ENCODE measurements at regions of chr15 and their contacts with region 1.

Region 1: GRCh38 chr15:34514251-34514670 is 69.2 kb downstream of the GOLGA8B start:
- DNase-seq: peak; percentile 39
- ATAC-seq: peak; percentile 83
- H3K4me3 Mint-ChIP-seq: peak overlapping the region; percentile 78
- H3K27ac Mint-ChIP-seq: no peak overlapping the region
- H3K4me1 Mint-ChIP-seq: peaks cover 24% of the 10 kb centered on the region
- H3K27me3 Mint-ChIP-seq: peaks cover 56% of the 10 kb centered on the region

Region 2: GRCh38 chr15:34483644-34484043 is 30.6 kb before region 1 on chr15:
- CTCF ChIA-PET with region 1: no interaction called
- POLR2A ChIA-PET with region 1: no interaction called
- DNase-seq: no peak
- ATAC-seq: no peak
- H3K4me3 Mint-ChIP-seq: no peak overlapping the region
- H3K27ac Mint-ChIP-seq: no peak overlapping the region
- H3K4me1 Mint-ChIP-seq: no peaks in the 10 kb centered on the region
- H3K27me3 Mint-ChIP-seq: peaks cover 55% of the 10 kb centered on the region

Region 3: DNA sequence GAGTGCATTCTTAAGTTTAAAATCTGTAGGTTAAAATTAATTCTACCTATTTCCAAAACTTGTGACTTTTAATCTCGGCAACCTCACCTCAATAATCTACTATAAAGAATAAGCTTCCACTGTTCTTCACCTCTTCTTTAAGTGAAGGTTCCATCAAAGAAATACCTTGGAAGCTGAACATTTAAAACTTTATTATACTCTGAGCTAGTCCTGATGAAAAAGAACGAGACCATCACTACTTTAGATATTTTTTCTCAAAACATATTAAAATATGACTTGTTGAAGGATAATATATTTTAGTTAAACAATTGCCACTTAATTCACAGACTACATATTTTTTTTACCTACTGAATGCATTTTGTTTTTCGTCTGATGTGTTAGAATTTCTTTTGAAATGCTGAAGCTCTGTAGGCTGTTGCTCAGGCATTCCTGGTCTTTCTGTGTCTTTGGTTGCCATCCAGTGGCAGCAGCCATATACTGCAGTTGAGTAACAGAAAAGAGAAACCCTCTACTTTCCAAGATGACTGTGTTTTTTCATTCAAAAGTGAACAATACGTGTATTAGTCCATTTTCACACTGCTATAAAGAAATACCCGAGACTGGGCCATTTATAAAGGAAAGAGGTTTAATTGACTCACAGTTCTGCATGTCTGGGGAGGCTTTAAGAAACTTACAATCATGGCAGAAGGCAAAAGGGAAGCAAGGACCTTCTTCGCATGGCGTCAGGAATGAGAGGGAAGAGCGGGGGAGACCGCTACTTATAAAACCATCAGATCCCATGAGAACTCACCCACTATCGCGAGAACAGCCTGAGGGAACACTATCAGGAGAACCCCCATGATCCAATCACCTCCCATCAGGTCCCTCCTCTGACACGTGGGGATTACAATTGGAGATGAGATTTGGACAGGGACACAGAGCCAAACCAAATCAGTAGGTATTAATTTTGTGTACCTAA is 73.7 kb after region 1 on chr15:
- CTCF ChIA-PET with region 1: interaction called, 14 read pairs
- POLR2A ChIA-PET with region 1: interaction called, 5 read pairs
- DNase-seq: peak; percentile 79
- ATAC-seq: no peak
- H3K4me3 Mint-ChIP-seq: peak overlapping the region; percentile 73
- H3K27ac Mint-ChIP-seq: peak overlapping the region; percentile 22
- H3K4me1 Mint-ChIP-seq: peaks cover 24% of the 10 kb centered on the region
- H3K27me3 Mint-ChIP-seq: peaks cover 25% of the 10 kb centered on the region